Activated naive CD4-positive, alpha-beta T cell treated with anti-CD3 and anti-CD28 coated beads for 36 hours (primary cell): ENCODE measurements at regions of chr10 and their contacts with region 1.

Region 1: GRCh38 chr10:119207367-119207668 is at the start of gene GRK5:
- DNase-seq: peak; percentile 93
- H3K4me3 Mint-ChIP-seq: peak within 1 kb of the TSS; percentile 85
- H3K27ac Mint-ChIP-seq: peak within 1 kb of the TSS; percentile 90
- H3K4me1 Mint-ChIP-seq: peaks cover 33% of the 10 kb centered on the region
- H3K27me3 Mint-ChIP-seq: no peaks in the 10 kb centered on the region
- total RNA-seq, gene GRK5: 27.1 to 29.7 TPM

Region 2: DNA sequence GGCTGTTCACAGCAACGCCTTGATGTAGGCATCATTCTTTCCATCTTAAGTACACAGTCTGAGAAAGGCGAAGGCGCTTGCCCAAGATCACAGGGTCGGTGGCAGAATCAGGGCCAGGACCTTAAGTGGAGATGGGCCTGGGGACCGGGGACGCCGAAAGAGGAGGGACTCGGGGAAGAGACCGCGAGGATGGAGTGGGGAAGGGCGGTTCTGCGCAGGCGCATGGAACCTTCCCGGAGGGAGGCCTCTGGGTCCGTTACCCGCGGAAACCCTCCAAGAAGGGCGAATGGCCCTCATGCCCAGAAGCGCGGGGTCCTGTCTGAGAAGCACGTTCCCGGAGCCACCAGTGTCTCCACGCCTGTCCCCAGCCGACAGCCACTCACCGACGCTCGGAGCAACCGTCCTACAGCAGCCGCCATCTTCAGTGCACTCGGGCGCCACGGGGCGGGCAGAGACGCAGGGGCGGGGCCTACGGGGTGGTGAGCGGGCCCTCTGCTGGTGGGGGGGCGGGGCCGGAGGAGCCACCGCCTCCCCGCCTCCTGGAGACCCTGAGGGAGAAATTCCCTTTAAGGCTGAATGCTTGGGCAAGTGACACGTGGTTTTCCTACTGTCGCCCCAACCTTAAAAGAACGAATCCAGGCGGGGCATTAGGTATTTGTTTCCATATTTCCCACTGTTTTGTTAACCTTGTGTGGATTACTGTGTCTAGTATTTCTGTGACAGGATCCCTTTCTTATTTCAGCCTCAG is 28.8 kb before region 1 on chr10 and contains the start of gene PRDX3:
- CTCF ChIA-PET with region 1: interaction called, 5 read pairs
- intact Hi-C with region 1: loop called (anchors 1 kb)
- DNase-seq: peak; percentile 96
- H3K4me3 Mint-ChIP-seq: peak within 1 kb of the TSS; percentile 93
- H3K27ac Mint-ChIP-seq: peak within 1 kb of the TSS; percentile 95
- H3K4me1 Mint-ChIP-seq: peaks cover 42% of the 10 kb centered on the region
- H3K27me3 Mint-ChIP-seq: no peaks in the 10 kb centered on the region
- total RNA-seq, gene PRDX3: 215 to 216 TPM

Region 3: DNA sequence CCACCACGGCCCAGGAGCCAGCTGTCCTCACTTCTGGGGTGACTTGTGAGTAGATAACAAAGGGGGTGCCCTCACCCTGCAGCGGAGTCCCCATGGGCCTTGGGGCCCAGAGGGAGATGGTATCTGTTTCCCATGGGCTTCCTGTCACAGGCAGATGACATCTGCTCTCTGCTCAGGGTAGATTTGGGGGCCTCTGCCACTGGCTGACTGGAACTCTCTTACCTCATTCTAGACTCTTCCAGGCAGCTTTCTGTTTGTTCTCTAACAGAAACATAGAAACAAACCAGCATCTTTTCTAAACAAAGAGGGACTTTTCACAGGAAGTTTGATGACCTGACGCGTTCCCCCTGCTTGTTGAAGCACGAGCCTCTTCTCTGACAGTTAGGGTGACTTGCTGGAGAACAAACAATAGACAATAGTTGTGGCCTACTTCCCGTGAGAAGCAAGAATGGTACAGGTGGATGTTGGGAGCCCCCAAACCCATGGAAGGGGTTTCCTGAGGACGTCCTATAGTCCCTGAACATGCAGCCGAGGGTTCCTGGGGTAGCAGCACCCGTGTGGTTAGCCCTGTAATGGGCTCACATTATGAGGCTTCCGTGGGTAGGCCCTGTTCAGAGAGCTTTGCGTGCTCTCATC is 61.7 kb after region 1 on chr10:
- CTCF ChIA-PET with region 1: interaction called, 6 read pairs
- intact Hi-C with region 1: loop called (anchors 1 kb)
- DNase-seq: peak; percentile 89
- H3K4me3 Mint-ChIP-seq: peak overlapping the region; percentile 39
- H3K27ac Mint-ChIP-seq: peak overlapping the region; percentile 93
- H3K4me1 Mint-ChIP-seq: peaks cover 52% of the 10 kb centered on the region
- H3K27me3 Mint-ChIP-seq: no peaks in the 10 kb centered on the region

Region 4: GRCh38 chr10:119323085-119324016 is 116.0 kb after region 1 on chr10:
- CTCF ChIA-PET with region 1: interaction called, 10 read pairs
- intact Hi-C with region 1: no loop called
- DNase-seq: no peak
- H3K4me3 Mint-ChIP-seq: no peak overlapping the region
- H3K27ac Mint-ChIP-seq: no peak overlapping the region
- H3K4me1 Mint-ChIP-seq: peaks cover 13% of the 10 kb centered on the region
- H3K27me3 Mint-ChIP-seq: no peaks in the 10 kb centered on the region

Region 5: GRCh38 chr10:119502209-119502608 is 294.9 kb after region 1 on chr10:
- CTCF ChIA-PET with region 1: no interaction called
- intact Hi-C with region 1: loop called (anchors 1 kb)
- DNase-seq: peak; percentile 93
- H3K4me3 Mint-ChIP-seq: peak overlapping the region; percentile 47
- H3K27ac Mint-ChIP-seq: peak overlapping the region; percentile 99
- H3K4me1 Mint-ChIP-seq: peaks cover 98% of the 10 kb centered on the region
- H3K27me3 Mint-ChIP-seq: no peaks in the 10 kb centered on the region

Region 6: GRCh38 chr10:119650692-119651513 is 443.6 kb after region 1 on chr10 and contains the start of gene BAG3:
- CTCF ChIA-PET with region 1: no interaction called
- intact Hi-C with region 1: loop called (anchors 2 kb)
- DNase-seq: peak; percentile 82
- H3K4me3 Mint-ChIP-seq: peak within 1 kb of the TSS; percentile 97
- H3K27ac Mint-ChIP-seq: peak within 1 kb of the TSS; percentile 95
- H3K4me1 Mint-ChIP-seq: peaks cover 38% of the 10 kb centered on the region
- H3K27me3 Mint-ChIP-seq: no peaks in the 10 kb centered on the region
- total RNA-seq, gene BAG3: 20.9 to 24.3 TPM